Activated CD8-positive, alpha-beta T cell treated with anti-CD3 and anti-CD28 coated beads for 36 hours (primary cell): ENCODE measurements at regions of chr7 and their contacts with region 1.

Region 1: DNA sequence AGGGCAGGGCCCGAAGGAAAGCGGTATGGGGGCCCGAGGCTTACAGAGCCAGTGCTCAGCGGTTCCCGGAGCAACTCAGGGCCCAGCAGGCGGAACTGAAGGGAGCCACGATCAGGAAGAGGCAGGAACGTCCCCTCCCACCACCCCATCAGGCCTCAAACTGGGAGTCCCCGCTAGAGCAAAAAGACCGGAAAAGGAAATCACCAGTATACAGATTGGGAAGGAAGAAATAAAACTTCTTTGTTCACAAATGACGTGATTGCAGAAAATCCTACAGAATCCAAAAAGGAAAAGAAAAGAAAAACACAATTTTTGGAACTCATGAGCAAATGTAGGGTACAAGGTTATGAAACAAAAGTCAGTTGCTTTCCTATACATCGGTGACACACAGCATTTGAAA is 21.6 kb upstream of the ZFAND2A start:
- DNase-seq: no peak
- ATAC-seq: no peak
- H3K4me3 Mint-ChIP-seq: no peak overlapping the region
- H3K27ac Mint-ChIP-seq: no peak overlapping the region
- H3K4me1 Mint-ChIP-seq: peaks cover 4% of the 10 kb centered on the region
- H3K27me3 Mint-ChIP-seq: peaks cover 28% of the 10 kb centered on the region
- CTCF ChIP-seq: no peak

Region 2: DNA sequence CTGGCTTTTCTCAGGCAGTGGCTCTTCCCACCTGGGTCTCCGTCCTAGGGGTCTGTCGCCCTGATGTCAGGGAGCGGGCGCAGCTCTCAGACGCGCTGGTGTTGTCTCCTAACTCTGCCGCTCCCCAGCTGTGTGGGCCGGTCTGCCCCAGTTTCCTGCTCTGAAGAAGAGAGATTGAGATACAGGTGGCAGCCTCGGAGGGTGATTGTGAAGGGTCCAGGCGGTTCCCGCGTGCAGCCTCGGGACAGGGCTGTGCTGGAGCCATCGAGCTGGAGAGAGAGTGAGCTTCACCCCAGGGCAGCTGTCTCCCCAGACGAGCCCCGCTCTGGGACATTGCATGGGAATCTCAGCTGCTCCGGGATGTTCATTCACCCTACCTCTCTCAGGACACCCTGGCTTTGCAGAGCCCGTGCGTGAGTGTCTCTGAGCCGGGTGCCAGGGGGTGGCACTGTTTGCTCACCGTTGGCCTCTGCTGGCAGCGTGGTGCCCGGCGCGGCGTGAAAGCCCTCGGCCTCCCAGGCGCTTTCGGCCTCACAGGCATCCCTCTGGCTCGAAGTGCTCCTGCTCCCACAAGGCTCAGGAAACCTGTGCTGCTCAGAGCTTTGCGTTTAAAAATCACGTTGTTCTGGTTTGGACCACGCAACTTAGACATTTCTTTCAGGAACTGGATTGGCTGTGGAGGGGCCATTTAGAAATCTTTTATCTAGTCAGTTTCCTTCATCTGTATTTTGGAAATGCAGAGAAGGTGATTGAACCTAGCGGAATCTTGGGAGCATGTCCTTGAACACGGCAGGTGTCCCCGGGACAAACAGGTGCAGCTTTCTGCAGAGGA is 12.2 kb after region 1 on chr7:
- CTCF ChIA-PET with region 1: interaction called, 37 read pairs
- POLR2A ChIA-PET with region 1: interaction called, 4 read pairs
- intact Hi-C with region 1: no loop called
- DNase-seq: peak; percentile 62
- ATAC-seq: peak; percentile 54
- H3K4me3 Mint-ChIP-seq: no peak overlapping the region
- H3K27ac Mint-ChIP-seq: no peak overlapping the region
- H3K4me1 Mint-ChIP-seq: peaks cover 10% of the 10 kb centered on the region
- H3K27me3 Mint-ChIP-seq: peaks cover 16% of the 10 kb centered on the region
- CTCF ChIP-seq: peak; percentile 23